K562 (cell line): ENCODE measurements at regions of chr20 and their contacts with region 1.

Region 1: GRCh38 chr20:43691928-43692524 is 25.1 kb downstream of the MYBL2 start:
- DNase-seq: peak; percentile 70 to 79 (median 74)
- ATAC-seq: peak; percentile 79
- H3K4me3 ChIP-seq: no peak overlapping the region
- H3K27ac ChIP-seq: no peak overlapping the region
- H3K4me1 ChIP-seq: peaks cover 17 to 18% of the 10 kb centered on the region in 2 experiments; a peak in 4 of 5 replicates
- H3K27me3 ChIP-seq: no peaks in the 10 kb centered on the region
- CTCF ChIP-seq: peak; percentile 79 to 86 (median 79)
- EP300 ChIP-seq: no peak
- POLR2A ChIP-seq: no peak
- RAD21 ChIP-seq: peak; percentile 78 to 81

Region 2: GRCh38 chr20:43537921-43538877 is 153.8 kb before region 1 on chr20:
- CTCF ChIA-PET with region 1: interaction called, 35 read pairs
- POLR2A ChIA-PET with region 1: interaction called, 3 read pairs
- in situ Hi-C with region 1: no loop called
- intact Hi-C with region 1: loop called (anchors 1 kb)
- DNase-seq: peak; percentile 75 to 87 (median 82)
- ATAC-seq: peak; percentile 94
- H3K4me3 ChIP-seq: no peak overlapping the region
- H3K27ac ChIP-seq: peak overlapping the region; percentile 65
- H3K4me1 ChIP-seq: peaks cover 18 to 24% of the 10 kb centered on the region in 2 experiments; a peak in 4 of 5 replicates
- H3K27me3 ChIP-seq: no peaks in the 10 kb centered on the region
- CTCF ChIP-seq: peak; percentile 81 to 97 (median 86)
- EP300 ChIP-seq: peak; percentile 94
- POLR2A ChIP-seq: no peak
- RAD21 ChIP-seq: peak; percentile 80 to 91

Region 3: DNA sequence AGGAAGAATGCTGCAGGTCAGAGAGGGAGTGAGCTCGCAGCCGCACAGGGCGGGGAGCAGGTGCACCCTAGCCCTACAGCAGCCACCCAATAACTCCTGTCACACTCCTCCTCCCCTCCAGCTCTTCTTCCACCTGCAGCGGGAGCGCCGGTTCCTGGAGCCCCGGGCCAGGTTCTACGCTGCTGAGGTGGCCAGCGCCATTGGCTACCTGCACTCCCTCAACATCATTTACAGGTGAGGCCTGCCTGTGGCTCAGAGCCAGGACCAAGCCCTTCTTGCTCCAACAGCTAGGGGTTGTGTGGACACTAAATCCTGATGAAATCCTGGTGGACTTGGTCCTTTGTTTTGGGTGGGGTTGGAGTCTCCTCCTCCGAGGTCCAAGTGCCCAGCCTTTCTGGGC is 121.5 kb before region 1 on chr20:
- CTCF ChIA-PET with region 1: interaction called, 7 read pairs
- POLR2A ChIA-PET with region 1: no interaction called
- in situ Hi-C with region 1: no loop called
- intact Hi-C with region 1: loop called (anchors 1 kb)
- DNase-seq: no peak
- ATAC-seq: no peak
- H3K4me3 ChIP-seq: no peak overlapping the region
- H3K27ac ChIP-seq: no peak overlapping the region
- H3K4me1 ChIP-seq: peaks cover 2 to 5% of the 10 kb centered on the region in 2 experiments; a peak in 3 of 5 replicates
- H3K27me3 ChIP-seq: no peaks in the 10 kb centered on the region
- CTCF ChIP-seq: no peak
- EP300 ChIP-seq: no peak
- POLR2A ChIP-seq: no peak
- RAD21 ChIP-seq: no peak

Region 4: GRCh38 chr20:43676368-43676767 is 15.7 kb before region 1 on chr20:
- CTCF ChIA-PET with region 1: no interaction called
- POLR2A ChIA-PET with region 1: interaction called, 4 read pairs
- in situ Hi-C with region 1: no loop called
- intact Hi-C with region 1: loop called (anchors 2 kb)
- DNase-seq: no peak
- ATAC-seq: no peak
- H3K4me3 ChIP-seq: no peak overlapping the region
- H3K27ac ChIP-seq: no peak overlapping the region
- H3K4me1 ChIP-seq: peaks cover 9 to 14% of the 10 kb centered on the region in 2 experiments; a peak in 4 of 5 replicates
- H3K27me3 ChIP-seq: no peaks in the 10 kb centered on the region
- CTCF ChIP-seq: no peak
- EP300 ChIP-seq: no peak
- POLR2A ChIP-seq: no peak
- RAD21 ChIP-seq: no peak